ENCODE measurements at regions of chr3 and their contacts with region 1.

Region 1: GRCh38 chr3:169863458-169863899 is 6.3 kb downstream of the LRRC31 start:
- DNase-seq: peak; percentile 21 to 82 (median 59)
- ATAC-seq: peak; percentile 69
- H3K4me3 ChIP-seq: no peak overlapping the region
- H3K4me3 Mint-ChIP-seq: no peak overlapping the region
- H3K27ac ChIP-seq: no peak overlapping the region
- H3K27ac Mint-ChIP-seq: no peak overlapping the region
- H3K4me1 ChIP-seq: peaks cover 15% of the 10 kb centered on the region
- H3K4me1 Mint-ChIP-seq: peaks cover 20% of the 10 kb centered on the region
- H3K27me3 ChIP-seq: peaks cover 0 to 4% of the 10 kb centered on the region in 2 experiments
- H3K27me3 Mint-ChIP-seq: peaks cover 5% of the 10 kb centered on the region
- CTCF ChIP-seq: peak; percentile 95

Region 2: GRCh38 chr3:169475576-169475975 is 387.9 kb before region 1 on chr3:
- CTCF ChIA-PET with region 1: no interaction called
- POLR2A ChIA-PET with region 1: no interaction called
- intact Hi-C with region 1: no loop called
- DNase-seq: no peak
- ATAC-seq: no peak
- H3K4me3 ChIP-seq: no peak overlapping the region
- H3K4me3 Mint-ChIP-seq: no peak overlapping the region
- H3K27ac ChIP-seq: no peak overlapping the region
- H3K27ac Mint-ChIP-seq: no peak overlapping the region
- H3K4me1 ChIP-seq: no peaks in the 10 kb centered on the region
- H3K4me1 Mint-ChIP-seq: no peaks in the 10 kb centered on the region
- H3K27me3 ChIP-seq: no peaks in the 10 kb centered on the region
- H3K27me3 Mint-ChIP-seq: no peaks in the 10 kb centered on the region
- CTCF ChIP-seq: no peak

Region 3: GRCh38 chr3:169812332-169813235 is 50.9 kb before region 1 on chr3 and contains the starts of genes LRRC34 and LRRIQ4:
- CTCF ChIA-PET with region 1: interaction called, 4 read pairs
- POLR2A ChIA-PET with region 1: no interaction called
- intact Hi-C with region 1: loop called in 1 of 2 experiments (anchors 5 kb)
- DNase-seq: peak; percentile 12 to 79 (median 68)
- ATAC-seq: peak; percentile 37
- H3K4me3 ChIP-seq: peak within 1 kb of the TSS; percentile 47 to 54
- H3K4me3 Mint-ChIP-seq: peak within 1 kb of the TSS; percentile 89
- H3K27ac ChIP-seq: peak within 1 kb of the TSS; percentile 2
- H3K27ac Mint-ChIP-seq: peak within 1 kb of the TSS; percentile 74
- H3K4me1 ChIP-seq: peaks cover 16% of the 10 kb centered on the region
- H3K4me1 Mint-ChIP-seq: peaks cover 28% of the 10 kb centered on the region
- H3K27me3 ChIP-seq: no peaks in the 10 kb centered on the region
- H3K27me3 Mint-ChIP-seq: no peaks in the 10 kb centered on the region
- CTCF ChIP-seq: no peak
- total RNA-seq, gene LRRC34: 0.36 to 0.54 TPM
- total RNA-seq, gene LRRIQ4: not detected

Region 4: DNA sequence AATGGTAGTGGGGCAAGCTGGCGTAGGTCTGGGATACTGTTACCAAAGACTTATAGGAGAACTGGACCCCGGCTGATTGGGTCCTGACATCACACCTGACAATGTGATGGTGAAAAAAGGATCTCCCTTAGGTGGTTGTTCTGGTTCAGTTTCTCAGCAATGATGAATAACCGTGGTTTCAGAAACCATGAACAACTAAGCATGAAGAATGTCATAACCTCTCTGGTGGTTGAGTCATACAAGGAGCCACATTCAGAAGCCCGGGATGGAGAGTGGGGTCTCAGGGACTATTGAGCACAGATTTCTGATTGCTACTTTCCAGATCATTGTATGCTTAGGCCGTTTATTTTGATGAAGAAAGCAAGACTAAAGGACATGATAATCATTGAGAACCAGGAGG is 191.7 kb after region 1 on chr3:
- CTCF ChIA-PET with region 1: interaction called, 4 read pairs
- POLR2A ChIA-PET with region 1: no interaction called
- intact Hi-C with region 1: loop called (anchors 1 to 2 kb)
- DNase-seq: no peak
- ATAC-seq: no peak
- H3K4me3 ChIP-seq: no peak overlapping the region
- H3K4me3 Mint-ChIP-seq: no peak overlapping the region
- H3K27ac ChIP-seq: no peak overlapping the region
- H3K27ac Mint-ChIP-seq: no peak overlapping the region
- H3K4me1 ChIP-seq: peaks cover 11% of the 10 kb centered on the region
- H3K4me1 Mint-ChIP-seq: peaks cover 7% of the 10 kb centered on the region
- H3K27me3 ChIP-seq: no peaks in the 10 kb centered on the region
- H3K27me3 Mint-ChIP-seq: no peaks in the 10 kb centered on the region
- CTCF ChIP-seq: no peak

Region 5: GRCh38 chr3:170089862-170090600 is 226.6 kb after region 1 on chr3:
- CTCF ChIA-PET with region 1: no interaction called
- POLR2A ChIA-PET with region 1: no interaction called
- intact Hi-C with region 1: loop called in 1 of 2 experiments (anchors 5 kb)
- DNase-seq: no peak
- ATAC-seq: no peak
- H3K4me3 ChIP-seq: no peak overlapping the region
- H3K4me3 Mint-ChIP-seq: no peak overlapping the region
- H3K27ac ChIP-seq: no peak overlapping the region
- H3K27ac Mint-ChIP-seq: peak overlapping the region; percentile 55
- H3K4me1 ChIP-seq: no peaks in the 10 kb centered on the region
- H3K4me1 Mint-ChIP-seq: peaks cover 10% of the 10 kb centered on the region
- H3K27me3 ChIP-seq: no peaks in the 10 kb centered on the region
- H3K27me3 Mint-ChIP-seq: no peaks in the 10 kb centered on the region
- CTCF ChIP-seq: no peak

Region 6: DNA sequence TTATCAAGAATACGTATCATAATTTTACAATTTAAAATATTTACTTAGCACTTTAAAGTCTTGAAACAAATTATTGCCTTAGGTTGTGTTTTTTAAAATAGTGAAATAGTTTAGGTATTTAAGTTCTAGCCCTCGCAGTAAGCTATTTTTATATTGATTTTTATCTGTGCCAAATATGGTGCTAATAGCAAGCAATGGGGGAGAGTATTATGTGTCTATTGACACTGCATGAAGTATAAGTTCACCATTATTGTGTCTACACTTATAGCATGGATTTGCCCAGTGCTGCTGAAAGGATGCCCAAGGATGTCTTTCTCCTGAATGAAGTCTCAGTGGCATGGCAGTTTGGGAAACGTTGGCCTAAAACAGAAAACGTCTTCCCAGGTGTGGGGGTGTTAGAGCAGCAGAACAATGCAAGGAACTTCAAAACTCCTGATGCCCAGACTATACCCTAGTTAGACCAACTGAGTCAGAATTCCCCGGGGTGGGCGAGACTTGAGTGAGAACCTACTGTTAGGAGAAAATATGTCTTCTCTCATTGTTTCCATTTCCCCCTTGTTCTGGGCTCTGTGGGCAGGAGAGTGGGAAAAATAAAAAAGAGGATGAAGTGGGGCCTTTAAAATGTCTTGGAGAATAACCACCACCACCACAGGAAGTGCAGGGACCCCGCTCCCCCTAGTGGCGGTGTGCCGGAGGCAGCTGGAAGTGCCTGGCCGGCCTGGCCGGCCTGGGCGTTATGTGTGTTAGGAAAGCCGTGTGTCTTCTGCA is 826.6 kb after region 1 on chr3:
- CTCF ChIA-PET with region 1: no interaction called
- POLR2A ChIA-PET with region 1: no interaction called
- intact Hi-C with region 1: loop called in 1 of 2 experiments (anchors 10 kb)
- DNase-seq: peak in 8 of 9 experiments; percentile 17 to 59 (median 28)
- ATAC-seq: no peak
- H3K4me3 ChIP-seq: no peak overlapping the region
- H3K4me3 Mint-ChIP-seq: no peak overlapping the region
- H3K27ac ChIP-seq: no peak overlapping the region
- H3K27ac Mint-ChIP-seq: no peak overlapping the region
- H3K4me1 ChIP-seq: no peaks in the 10 kb centered on the region
- H3K4me1 Mint-ChIP-seq: no peaks in the 10 kb centered on the region
- H3K27me3 ChIP-seq: no peaks in the 10 kb centered on the region
- H3K27me3 Mint-ChIP-seq: no peaks in the 10 kb centered on the region
- CTCF ChIP-seq: peak; percentile 34

Region 7: GRCh38 chr3:170811928-170812591 is 948.6 kb after region 1 on chr3:
- CTCF ChIA-PET with region 1: no interaction called
- POLR2A ChIA-PET with region 1: no interaction called
- intact Hi-C with region 1: loop called (anchors 5 kb)
- DNase-seq: peak; percentile 37 to 78 (median 59)
- ATAC-seq: peak; percentile 98
- H3K4me3 ChIP-seq: no peak overlapping the region
- H3K4me3 Mint-ChIP-seq: no peak overlapping the region
- H3K27ac ChIP-seq: no peak overlapping the region
- H3K27ac Mint-ChIP-seq: no peak overlapping the region
- H3K4me1 ChIP-seq: no peaks in the 10 kb centered on the region
- H3K4me1 Mint-ChIP-seq: no peaks in the 10 kb centered on the region
- H3K27me3 ChIP-seq: peaks cover 0 to 2% of the 10 kb centered on the region in 2 experiments
- H3K27me3 Mint-ChIP-seq: peaks cover 2% of the 10 kb centered on the region
- CTCF ChIP-seq: peak; percentile 87

Measured in CD8-positive, alpha-beta T cell (primary cell).